ENCODE measurements at regions of chr17 and their contacts with region 1.

Region 1: GRCh38 chr17:8383143-8383822 is at the start of gene RPL26:
- DNase-seq: peak; percentile 97
- ATAC-seq: peak; percentile 88
- H3K4me3 ChIP-seq: peak within 1 kb of the TSS; percentile 85 to 98
- H3K27ac ChIP-seq: peak within 1 kb of the TSS; percentile 96
- H3K4me1 ChIP-seq: peaks cover 20 to 44% of the 10 kb centered on the region in 2 experiments
- H3K27me3 ChIP-seq: no peaks in the 10 kb centered on the region
- CTCF ChIP-seq: peak; percentile 62 to 98 (median 96)
- POLR2A ChIP-seq: peak; percentile 86
- RAD21 ChIP-seq: peak; percentile 70
- total RNA-seq, gene RPL26: 2,603 TPM

Region 2: GRCh38 chr17:8359769-8360168 is 23.5 kb before region 1 on chr17:
- CTCF ChIA-PET with region 1: no interaction called
- POLR2A ChIA-PET with region 1: no interaction called
- RAD21 ChIA-PET with region 1: no interaction called
- intact Hi-C with region 1: no loop called
- DNase-seq: no peak
- ATAC-seq: no peak
- H3K4me3 ChIP-seq: no peak overlapping the region
- H3K27ac ChIP-seq: no peak overlapping the region
- H3K4me1 ChIP-seq: peaks cover 0 to 5% of the 10 kb centered on the region in 2 experiments; a peak in 1 of 4 replicates
- H3K27me3 ChIP-seq: no peaks in the 10 kb centered on the region
- CTCF ChIP-seq: no peak
- POLR2A ChIP-seq: no peak
- RAD21 ChIP-seq: no peak

Region 3: GRCh38 chr17:8393420-8394241 is 10.3 kb after region 1 on chr17:
- CTCF ChIA-PET with region 1: interaction called, 3 read pairs
- POLR2A ChIA-PET with region 1: interaction called, 12 read pairs
- RAD21 ChIA-PET with region 1: no interaction called
- intact Hi-C with region 1: no loop called
- DNase-seq: no peak
- ATAC-seq: peak; percentile 21; the same call in 1 of the 2 replicates
- H3K4me3 ChIP-seq: no peak overlapping the region
- H3K27ac ChIP-seq: no peak overlapping the region
- H3K4me1 ChIP-seq: peaks cover 0 to 27% of the 10 kb centered on the region in 2 experiments; a peak in 2 of 4 replicates
- H3K27me3 ChIP-seq: no peaks in the 10 kb centered on the region
- CTCF ChIP-seq: no peak
- POLR2A ChIP-seq: no peak
- RAD21 ChIP-seq: no peak

Region 4: GRCh38 chr17:8435245-8436168 is 52.2 kb after region 1 on chr17 and contains the start of gene NDEL1:
- CTCF ChIA-PET with region 1: interaction called, 6 read pairs
- POLR2A ChIA-PET with region 1: interaction called, 7 read pairs
- RAD21 ChIA-PET with region 1: interaction called in 1 of 2 experiments, 6 read pairs
- intact Hi-C with region 1: loop called (anchors 1 kb)
- DNase-seq: peak; percentile 92
- ATAC-seq: peak; percentile 98
- H3K4me3 ChIP-seq: peak within 1 kb of the TSS; percentile 71 to 94
- H3K27ac ChIP-seq: peak within 1 kb of the TSS; percentile 94
- H3K4me1 ChIP-seq: peaks cover 6 to 20% of the 10 kb centered on the region in 2 experiments
- H3K27me3 ChIP-seq: no peaks in the 10 kb centered on the region
- CTCF ChIP-seq: no peak
- POLR2A ChIP-seq: peak; percentile 96
- RAD21 ChIP-seq: 0 out of 2 replicates have a peak, but pooled peaks have one; percentile 3
- total RNA-seq, gene NDEL1: 39.2 TPM

Region 5: DNA sequence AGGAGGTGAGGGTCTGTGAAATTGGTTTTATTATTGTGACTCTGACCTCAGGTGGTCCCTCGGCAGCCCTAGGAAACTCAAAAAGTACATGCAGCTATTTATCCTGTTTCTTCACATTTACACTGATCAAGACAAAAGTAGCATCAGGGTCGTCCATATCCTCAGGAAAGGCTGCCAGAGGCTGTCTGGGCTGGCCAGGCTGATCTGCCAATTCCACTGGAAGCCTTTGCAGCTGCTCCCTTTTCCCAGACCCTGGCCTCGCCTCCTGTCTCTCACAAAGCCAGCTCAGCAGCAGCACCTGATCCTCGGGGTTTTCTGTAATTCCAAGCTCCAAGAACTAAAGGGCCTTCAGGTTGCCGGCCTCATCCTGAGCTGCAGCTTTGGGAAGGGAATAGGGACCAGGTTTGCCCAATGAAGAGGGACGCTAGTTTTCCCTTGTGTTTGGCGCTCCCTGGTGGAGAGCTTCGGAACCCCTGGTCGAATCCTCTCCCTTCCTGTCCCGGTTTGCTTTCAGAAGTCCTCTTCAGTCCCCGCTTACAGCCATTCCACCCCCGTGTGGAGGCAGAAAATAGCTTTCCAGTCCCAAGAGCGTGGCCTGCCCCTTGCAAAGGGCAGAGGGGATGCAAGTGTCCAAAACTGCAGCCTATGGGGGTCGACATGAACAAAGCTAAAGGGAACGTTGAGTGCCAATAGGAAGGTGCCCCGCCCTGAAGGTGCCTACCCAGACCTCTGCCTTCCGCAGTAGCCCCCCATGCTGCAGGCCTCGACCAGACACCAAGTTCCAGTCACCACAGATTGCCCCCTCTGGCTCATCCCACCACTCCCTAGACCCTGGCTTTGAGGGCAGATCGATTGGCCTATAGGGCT is 402.5 kb after region 1 on chr17:
- CTCF ChIA-PET with region 1: interaction called, 29 read pairs
- POLR2A ChIA-PET with region 1: interaction called, 8 read pairs
- RAD21 ChIA-PET with region 1: interaction called in 1 of 2 experiments, 3 read pairs
- intact Hi-C with region 1: loop called (anchors 1 kb)
- DNase-seq: peak; percentile 64
- ATAC-seq: peak; percentile 99
- H3K4me3 ChIP-seq: no peak overlapping the region
- H3K27ac ChIP-seq: no peak overlapping the region
- H3K4me1 ChIP-seq: peaks cover 0 to 3% of the 10 kb centered on the region in 2 experiments; a peak in 1 of 4 replicates
- H3K27me3 ChIP-seq: no peaks in the 10 kb centered on the region
- CTCF ChIP-seq: peak; percentile 79 to 93 (median 86)
- POLR2A ChIP-seq: no peak
- RAD21 ChIP-seq: peak; percentile 92

Measured in HCT116 (cell line).